ENCODE measurements at regions of chr4 and their contacts with region 1.

Region 1: DNA sequence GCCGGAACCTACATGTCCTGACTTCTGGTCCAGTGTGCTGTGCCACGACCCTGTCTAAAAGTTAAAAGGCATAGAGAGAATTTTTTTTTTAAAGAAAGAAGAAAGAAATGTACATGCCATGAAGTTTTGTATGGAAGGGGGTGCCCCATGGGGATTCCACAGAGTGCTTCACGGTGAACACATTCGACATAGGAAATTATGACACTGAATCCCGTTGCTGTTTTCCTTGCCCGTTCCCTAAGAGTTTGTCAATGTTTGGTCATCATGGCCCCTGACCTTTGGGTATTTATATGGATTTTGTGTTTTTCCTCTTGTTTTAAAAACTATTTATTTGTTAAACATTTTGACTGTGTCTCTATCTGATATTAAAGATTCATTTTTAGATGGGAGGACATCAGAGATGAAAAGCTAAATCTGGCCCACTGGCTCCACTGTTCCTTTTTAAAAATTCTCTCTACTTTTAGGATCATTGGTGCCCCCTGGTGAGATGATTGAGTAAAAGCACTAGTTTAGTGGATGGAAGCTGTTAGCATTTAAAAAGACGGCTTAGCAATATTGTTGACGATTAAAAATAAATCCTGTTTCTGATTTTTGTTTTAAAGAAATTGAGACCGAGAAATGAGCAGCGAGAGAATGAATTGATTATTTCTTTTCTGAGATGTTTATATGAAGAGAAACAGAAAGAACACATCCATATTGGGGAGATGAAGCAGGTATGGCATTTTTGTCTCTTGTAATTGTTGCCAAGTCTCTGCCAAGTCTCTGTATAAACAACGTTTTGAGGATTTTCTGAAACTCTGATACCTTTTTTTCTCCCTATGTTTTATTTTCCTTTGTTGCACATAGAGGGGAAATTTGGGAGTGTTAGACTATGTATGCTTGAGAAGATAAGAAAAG is 75.0 kb downstream of the PTTG2 start:
- DNase-seq: no peak
- H3K4me3 ChIP-seq: no peak overlapping the region
- H3K27ac ChIP-seq: no peak overlapping the region
- H3K4me1 ChIP-seq: peaks cover 0 to 6% (median 0%) of the 10 kb centered on the region in 3 donors
- H3K27me3 ChIP-seq: no peaks in the 10 kb centered on the region
- CTCF ChIP-seq: peak; percentile 11 to 74 (median 70)
- POLR2A ChIP-seq: no peak

Region 2: DNA sequence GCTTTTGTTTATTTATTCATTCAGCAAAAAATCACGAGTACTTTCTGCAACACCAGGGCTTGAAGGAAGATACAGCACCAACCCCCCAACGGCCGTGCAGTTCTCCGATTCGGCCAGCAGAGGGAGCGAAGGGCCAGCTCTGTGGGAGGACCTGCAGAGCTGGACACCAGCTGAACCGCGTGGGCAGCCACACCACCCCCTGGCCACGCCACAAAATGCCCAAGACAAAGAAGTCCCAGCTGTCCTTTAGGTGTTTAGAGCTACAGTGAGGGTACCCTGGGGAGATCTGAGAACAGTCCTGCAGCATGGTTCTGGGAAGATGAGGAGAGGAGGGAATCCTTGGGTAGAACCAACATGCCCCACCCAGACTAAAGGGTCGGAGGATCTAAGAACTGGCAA is 432.2 kb before region 1 on chr4:
- intact Hi-C with region 1: loop called (anchors 10 kb)
- DNase-seq: peak; percentile 2
- H3K4me3 ChIP-seq: no peak overlapping the region
- H3K27ac ChIP-seq: no peak overlapping the region
- H3K4me1 ChIP-seq: peaks cover 0 to 16% (median 4%) of the 10 kb centered on the region in 3 donors
- H3K27me3 ChIP-seq: no peaks in the 10 kb centered on the region
- CTCF ChIP-seq: peak; percentile 85 to 99 (median 96)
- POLR2A ChIP-seq: no peak

Region 3: GRCh38 chr4:37802068-37802666 is 233.1 kb before region 1 on chr4:
- intact Hi-C with region 1: loop called (anchors 5 kb)
- DNase-seq: no peak
- H3K4me3 ChIP-seq: no peak overlapping the region
- H3K27ac ChIP-seq: no peak overlapping the region
- H3K4me1 ChIP-seq: no peaks in the 10 kb centered on the region
- H3K27me3 ChIP-seq: no peaks in the 10 kb centered on the region
- CTCF ChIP-seq: peak; percentile 26 to 82 (median 54)
- POLR2A ChIP-seq: no peak

Region 4: DNA sequence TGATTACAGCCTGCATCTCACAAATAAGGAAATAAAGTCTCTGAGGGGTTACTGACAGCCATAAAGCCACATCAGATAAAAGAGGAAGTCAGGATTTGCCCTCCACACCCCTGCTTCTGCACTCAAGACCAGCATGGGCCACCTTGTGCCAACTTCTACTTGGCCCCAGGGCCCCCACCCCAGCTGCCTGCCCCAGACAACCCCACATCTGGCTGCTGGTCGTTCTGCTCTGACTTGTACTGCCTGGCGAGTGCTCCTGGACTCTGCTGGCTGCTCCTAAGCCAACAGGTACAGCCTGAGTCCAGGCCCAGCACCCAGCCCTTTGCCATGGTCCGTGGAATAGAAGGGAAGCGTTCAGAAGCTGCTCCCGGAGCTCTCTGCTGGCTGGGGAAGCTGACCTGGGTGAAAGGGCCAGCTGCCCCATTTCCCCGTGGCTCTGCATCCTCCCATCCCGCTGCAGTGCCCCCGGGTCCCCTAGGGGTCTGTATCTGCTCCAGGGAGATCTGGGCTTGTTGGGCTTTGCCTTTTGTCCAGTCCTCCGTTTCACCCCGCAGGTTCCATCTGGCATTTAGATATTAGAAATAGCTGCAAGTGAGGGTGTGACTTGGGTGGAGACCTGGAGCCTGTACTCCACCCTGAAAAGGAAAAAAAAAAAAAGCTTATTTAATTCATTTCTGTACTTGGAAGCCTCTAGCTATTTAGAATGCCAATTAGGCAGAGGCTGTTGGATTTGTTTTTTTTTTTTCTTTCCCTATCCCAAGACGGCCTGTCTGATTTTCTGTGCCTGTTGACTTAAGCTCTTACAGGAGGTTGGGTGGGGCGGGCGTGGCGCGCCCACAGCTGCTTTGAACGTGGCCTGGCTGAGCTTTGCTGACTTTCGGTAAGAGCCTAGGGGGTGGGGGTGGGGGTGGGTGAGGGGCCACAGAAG is 119.7 kb after region 1 on chr4:
- intact Hi-C with region 1: no loop called
- DNase-seq: no peak
- H3K4me3 ChIP-seq: peak overlapping the region in 1 of 4 donors; percentile 42
- H3K27ac ChIP-seq: peak overlapping the region; percentile 75 to 89 (median 86)
- H3K4me1 ChIP-seq: peaks cover 24 to 77% (median 36%) of the 10 kb centered on the region in 3 donors
- H3K27me3 ChIP-seq: no peaks in the 10 kb centered on the region
- CTCF ChIP-seq: no peak
- POLR2A ChIP-seq: no peak

Region 5: GRCh38 chr4:38343608-38344007 is 308.4 kb after region 1 on chr4:
- intact Hi-C with region 1: no loop called
- DNase-seq: no peak
- H3K4me3 ChIP-seq: no peak overlapping the region
- H3K27ac ChIP-seq: no peak overlapping the region
- H3K4me1 ChIP-seq: no peaks in the 10 kb centered on the region
- H3K27me3 ChIP-seq: no peaks in the 10 kb centered on the region
- CTCF ChIP-seq: no peak
- POLR2A ChIP-seq: no peak

Measured in esophagus squamous epithelium (tissue), 5 donors.